Activated naive CD4-positive, alpha-beta T cell treated with anti-CD3 and anti-CD28 coated beads for 36 hours (primary cell): ENCODE measurements at regions of chr6 and their contacts with region 1.

Region 1: DNA sequence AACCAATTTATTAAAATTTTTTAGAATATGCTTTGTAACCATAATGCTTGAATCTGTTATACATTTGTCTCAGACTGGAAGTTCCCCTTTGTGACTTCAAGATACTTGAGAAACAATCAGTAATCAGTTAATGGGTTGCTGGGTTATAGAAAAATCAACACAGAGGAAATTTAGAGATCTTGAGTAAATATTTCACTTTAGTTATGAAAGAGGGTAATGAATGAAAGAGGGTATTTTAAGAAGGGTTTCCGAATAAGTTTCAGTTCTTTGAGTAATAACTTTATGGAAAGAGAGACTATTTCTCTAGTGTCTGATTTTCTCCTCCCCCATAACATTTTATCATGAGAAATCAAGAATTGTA is 21.4 kb downstream of the ZFAND3 start:
- DNase-seq: no peak
- H3K4me3 Mint-ChIP-seq: no peak overlapping the region
- H3K27ac Mint-ChIP-seq: no peak overlapping the region
- H3K4me1 Mint-ChIP-seq: peaks cover 51% of the 10 kb centered on the region
- H3K27me3 Mint-ChIP-seq: no peaks in the 10 kb centered on the region

Region 2: GRCh38 chr6:37819177-37819823 is 21.6 kb before region 1 on chr6 and contains the start of gene ZFAND3:
- CTCF ChIA-PET with region 1: interaction called, 4 read pairs
- intact Hi-C with region 1: loop called (anchors 2 kb)
- DNase-seq: peak; percentile 95
- H3K4me3 Mint-ChIP-seq: peak within 1 kb of the TSS; percentile 92
- H3K27ac Mint-ChIP-seq: peak within 1 kb of the TSS; percentile 98
- H3K4me1 Mint-ChIP-seq: peaks cover 52% of the 10 kb centered on the region
- H3K27me3 Mint-ChIP-seq: no peaks in the 10 kb centered on the region
- total RNA-seq, gene ZFAND3: 33.6 to 35.3 TPM

Region 3: DNA sequence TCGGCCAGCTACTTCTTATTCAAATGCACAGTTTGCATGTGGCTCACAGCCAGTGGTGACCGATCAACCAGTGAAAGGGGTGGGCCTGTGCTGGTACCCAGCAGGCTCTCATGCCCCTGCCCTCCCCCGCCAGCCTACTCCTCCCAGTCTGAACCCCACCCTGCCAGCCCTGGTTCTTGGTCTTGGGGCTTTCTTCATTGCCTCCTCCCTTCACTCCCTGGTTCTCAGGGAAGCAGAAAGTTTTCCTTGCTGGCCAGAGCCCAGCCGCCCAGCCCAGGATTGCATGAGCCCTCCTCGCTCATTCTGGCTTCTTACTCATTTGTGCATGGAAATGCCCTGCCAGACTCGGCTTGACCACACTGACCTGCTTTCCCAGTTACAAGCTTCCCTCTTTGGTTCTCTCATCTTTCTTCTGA is 1432.5 kb after region 1 on chr6:
- CTCF ChIA-PET with region 1: no interaction called
- intact Hi-C with region 1: no loop called
- DNase-seq: no peak
- H3K4me3 Mint-ChIP-seq: no peak overlapping the region
- H3K27ac Mint-ChIP-seq: no peak overlapping the region
- H3K4me1 Mint-ChIP-seq: no peaks in the 10 kb centered on the region
- H3K27me3 Mint-ChIP-seq: no peaks in the 10 kb centered on the region